ENCODE measurements at regions of chr1 and their contacts with region 1.

Region 1: GRCh38 chr1:65075123-65075976 is 72.7 kb upstream of the AK4 start:
- DNase-seq: peak; percentile 84
- H3K4me3 Mint-ChIP-seq: no peak overlapping the region
- H3K27ac Mint-ChIP-seq: no peak overlapping the region
- H3K4me1 Mint-ChIP-seq: peaks cover 20% of the 10 kb centered on the region
- H3K27me3 Mint-ChIP-seq: no peaks in the 10 kb centered on the region

Region 2: DNA sequence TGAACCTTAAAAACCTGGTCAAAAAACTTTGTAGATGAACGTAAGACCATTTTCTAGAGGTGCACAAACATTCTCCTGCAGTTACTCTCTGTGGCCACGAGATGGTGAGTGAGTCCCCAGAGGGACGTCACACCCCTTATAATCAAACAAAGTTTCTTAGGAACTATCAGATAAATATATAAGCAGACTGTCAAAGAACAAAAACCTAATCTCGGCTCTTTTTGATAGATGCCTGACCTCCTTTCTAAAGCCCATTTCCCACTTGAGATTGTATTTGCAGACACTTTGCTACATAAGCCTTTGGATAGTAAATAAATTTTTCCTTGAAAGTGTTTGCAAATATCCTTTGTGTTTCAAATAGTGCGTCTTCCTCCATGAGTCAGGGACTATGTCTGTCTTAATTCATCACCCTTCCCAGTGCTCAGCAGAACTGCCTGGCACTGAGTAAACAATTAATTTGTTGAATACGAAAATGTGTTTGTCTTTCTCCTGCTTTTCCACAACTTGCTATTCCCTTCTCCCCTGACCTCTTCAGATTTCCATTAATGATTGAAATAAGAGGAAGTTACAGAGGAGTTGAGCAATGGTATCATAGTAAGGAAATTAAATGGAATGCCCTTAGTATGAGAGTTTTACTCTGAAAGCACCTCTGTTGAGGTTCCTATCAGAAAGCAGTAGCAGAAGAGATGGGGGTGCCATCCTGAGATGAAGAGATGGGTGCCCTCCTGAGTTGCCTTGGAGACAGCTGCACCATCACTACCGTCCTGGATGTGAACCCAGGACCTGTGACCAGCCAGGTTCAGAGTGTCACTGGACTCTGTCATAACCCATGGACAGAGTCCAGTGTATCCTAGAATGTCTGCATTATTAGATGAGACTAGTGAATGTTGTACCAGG is 388.3 kb before region 1 on chr1:
- CTCF ChIA-PET with region 1: interaction called, 4 read pairs
- intact Hi-C with region 1: loop called (anchors 1 kb)
- DNase-seq: peak; percentile 39
- H3K4me3 Mint-ChIP-seq: no peak overlapping the region
- H3K27ac Mint-ChIP-seq: no peak overlapping the region
- H3K4me1 Mint-ChIP-seq: peaks cover 5% of the 10 kb centered on the region
- H3K27me3 Mint-ChIP-seq: no peaks in the 10 kb centered on the region

Region 3: DNA sequence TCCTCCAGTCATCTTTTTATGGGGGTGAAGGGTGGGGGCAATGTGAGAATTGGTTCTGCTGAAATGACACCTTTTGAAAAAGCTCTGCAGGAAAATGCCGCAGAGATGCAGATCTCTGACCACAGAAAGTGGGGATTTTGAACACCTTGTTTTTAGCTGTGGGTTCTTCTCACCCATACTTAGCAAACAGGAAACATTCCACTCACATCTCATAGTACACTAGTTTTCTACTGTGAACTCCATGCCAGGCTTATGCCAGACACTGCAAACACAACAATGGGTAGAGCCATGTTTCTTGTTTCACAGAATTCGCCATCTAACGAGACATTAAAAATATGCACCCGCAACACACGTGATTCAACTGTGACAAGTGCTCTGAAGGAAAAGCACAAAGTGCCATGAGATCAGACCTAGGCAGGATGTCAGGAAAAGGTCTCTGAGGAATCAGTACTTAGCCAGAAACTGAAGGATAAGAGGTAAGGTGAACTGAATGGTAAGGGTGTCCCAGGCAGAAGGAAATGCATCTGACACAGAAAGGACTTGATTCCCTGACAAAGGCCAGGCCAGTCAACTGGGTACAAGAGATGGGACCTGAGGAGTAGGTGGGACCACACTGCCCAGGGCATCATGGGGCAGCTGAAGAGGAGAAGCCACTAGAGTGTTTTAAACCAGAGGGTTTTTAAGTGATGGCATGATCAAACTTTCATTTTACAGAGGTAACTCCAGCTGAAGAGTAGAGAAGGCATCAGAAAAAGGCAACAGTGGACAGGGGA is 25.2 kb before region 1 on chr1:
- CTCF ChIA-PET with region 1: interaction called, 22 read pairs
- intact Hi-C with region 1: no loop called
- DNase-seq: peak; percentile 38
- H3K4me3 Mint-ChIP-seq: peak overlapping the region; percentile 10
- H3K27ac Mint-ChIP-seq: peak overlapping the region; percentile 17
- H3K4me1 Mint-ChIP-seq: peaks cover 47% of the 10 kb centered on the region
- H3K27me3 Mint-ChIP-seq: no peaks in the 10 kb centered on the region

Region 4: GRCh38 chr1:65059930-65060538 is 15.3 kb before region 1 on chr1:
- CTCF ChIA-PET with region 1: interaction called, 118 read pairs
- intact Hi-C with region 1: loop called (anchors 1 kb)
- DNase-seq: no peak
- H3K4me3 Mint-ChIP-seq: no peak overlapping the region
- H3K27ac Mint-ChIP-seq: no peak overlapping the region
- H3K4me1 Mint-ChIP-seq: peaks cover 61% of the 10 kb centered on the region
- H3K27me3 Mint-ChIP-seq: no peaks in the 10 kb centered on the region

Measured in activated naive CD4-positive, alpha-beta T cell treated with anti-CD3 and anti-CD28 coated beads for 36 hours (primary cell).